ENCODE measurements at regions of chr2 and their contacts with region 1.

Region 1: DNA sequence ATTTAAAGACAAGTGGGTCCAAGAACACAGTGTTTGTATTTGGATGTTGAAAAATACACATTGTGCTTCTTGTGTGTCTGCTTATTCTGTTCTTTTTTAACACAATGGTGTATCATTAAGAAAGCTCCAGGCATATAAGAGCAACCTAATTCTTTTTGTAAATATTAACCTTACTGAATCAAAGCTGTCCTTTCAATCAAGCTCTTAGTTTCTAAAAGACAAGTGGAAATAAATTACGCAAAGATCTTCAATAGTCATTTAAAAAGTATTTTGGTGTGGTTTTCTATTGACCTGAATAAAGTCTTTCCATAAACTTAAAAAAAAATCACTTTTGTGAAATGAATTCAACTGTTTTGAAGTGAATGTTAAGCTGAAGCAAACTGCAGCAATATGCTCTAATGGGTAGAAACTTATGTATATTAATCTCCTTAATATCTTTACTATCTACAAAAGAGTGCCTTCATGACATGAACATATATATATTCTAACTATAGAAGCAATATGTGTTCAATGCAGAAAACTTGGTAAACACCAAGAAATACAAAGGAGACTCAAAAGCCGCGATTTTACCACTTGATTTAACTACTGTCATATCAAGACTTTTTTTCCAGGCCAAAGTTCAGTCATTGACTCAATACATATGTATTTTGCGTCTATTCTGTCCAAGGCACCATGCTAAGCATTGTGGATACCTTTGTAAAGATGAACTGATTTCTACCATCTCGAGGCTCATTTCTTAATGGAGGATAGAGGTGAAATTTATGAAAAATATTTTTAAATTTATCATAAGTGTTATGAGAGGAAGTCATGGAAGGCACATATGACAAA is 97.7 kb downstream of the ARHGAP15 start:
- DNase-seq: no peak
- H3K4me3 Mint-ChIP-seq: no peak overlapping the region
- H3K27ac Mint-ChIP-seq: no peak overlapping the region
- H3K4me1 Mint-ChIP-seq: peaks cover 38% of the 10 kb centered on the region
- H3K27me3 Mint-ChIP-seq: no peaks in the 10 kb centered on the region

Region 2: DNA sequence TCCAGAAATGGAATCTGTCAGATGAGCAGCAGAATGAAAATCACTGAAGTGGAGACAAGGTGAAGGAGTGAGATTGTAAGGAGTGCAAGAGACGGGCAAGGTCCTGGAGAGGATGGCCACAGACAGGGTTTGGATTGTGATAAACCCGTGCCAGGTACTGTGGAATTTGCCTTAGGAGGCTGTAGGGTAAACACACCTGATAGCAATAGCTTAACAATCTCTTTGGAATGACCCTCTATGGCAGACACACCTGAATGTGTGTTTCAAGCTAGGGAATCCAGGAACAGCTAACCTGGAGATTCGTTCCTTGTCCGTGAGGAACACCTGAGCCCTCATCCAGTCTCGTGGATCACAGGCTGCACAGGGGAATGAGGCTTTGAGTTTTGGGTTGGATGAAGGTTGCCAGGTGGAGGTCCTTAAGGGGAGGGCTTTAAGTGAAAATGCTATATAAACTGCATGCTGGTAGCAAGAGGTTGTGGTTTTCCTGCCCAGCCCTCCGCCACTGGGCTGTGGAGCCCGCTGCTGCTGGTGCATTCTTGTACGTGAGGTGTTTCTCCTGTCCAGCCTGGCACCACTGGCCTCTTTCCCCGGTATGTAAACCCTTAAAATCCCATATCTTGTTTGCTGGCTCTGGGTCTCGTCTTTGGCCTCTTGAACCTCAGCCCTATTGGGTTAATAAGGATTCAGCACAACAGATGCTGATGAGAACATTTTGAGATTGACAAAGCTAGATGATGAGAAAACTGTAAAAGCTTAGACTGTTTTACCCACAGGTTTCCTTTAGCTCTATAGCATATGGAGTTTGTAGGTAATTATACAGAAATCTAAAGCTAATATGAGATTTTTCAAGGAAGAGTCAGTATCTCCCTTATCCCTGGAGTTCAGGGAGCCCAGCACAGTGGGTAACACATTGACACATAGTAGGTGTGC is 20.2 kb after region 1 on chr2:
- CTCF ChIA-PET with region 1: interaction called, 20 read pairs
- POLR2A ChIA-PET with region 1: no interaction called
- intact Hi-C with region 1: no loop called
- DNase-seq: peak; percentile 49
- H3K4me3 Mint-ChIP-seq: no peak overlapping the region
- H3K27ac Mint-ChIP-seq: no peak overlapping the region
- H3K4me1 Mint-ChIP-seq: peaks cover 32% of the 10 kb centered on the region
- H3K27me3 Mint-ChIP-seq: no peaks in the 10 kb centered on the region

Region 3: GRCh38 chr2:143758629-143759330 is 531.9 kb after region 1 on chr2:
- CTCF ChIA-PET with region 1: no interaction called
- POLR2A ChIA-PET with region 1: no interaction called
- intact Hi-C with region 1: no loop called
- DNase-seq: no peak
- H3K4me3 Mint-ChIP-seq: no peak overlapping the region
- H3K27ac Mint-ChIP-seq: no peak overlapping the region
- H3K4me1 Mint-ChIP-seq: no peaks in the 10 kb centered on the region
- H3K27me3 Mint-ChIP-seq: no peaks in the 10 kb centered on the region

Measured in activated CD4-positive, alpha-beta memory T cell treated with anti-CD3 and anti-CD28 coated beads for 36 hours (primary cell).